Pancreas (tissue), 10 donors: ENCODE measurements at regions of chr7 and their contacts with region 1.

Region 1: DNA sequence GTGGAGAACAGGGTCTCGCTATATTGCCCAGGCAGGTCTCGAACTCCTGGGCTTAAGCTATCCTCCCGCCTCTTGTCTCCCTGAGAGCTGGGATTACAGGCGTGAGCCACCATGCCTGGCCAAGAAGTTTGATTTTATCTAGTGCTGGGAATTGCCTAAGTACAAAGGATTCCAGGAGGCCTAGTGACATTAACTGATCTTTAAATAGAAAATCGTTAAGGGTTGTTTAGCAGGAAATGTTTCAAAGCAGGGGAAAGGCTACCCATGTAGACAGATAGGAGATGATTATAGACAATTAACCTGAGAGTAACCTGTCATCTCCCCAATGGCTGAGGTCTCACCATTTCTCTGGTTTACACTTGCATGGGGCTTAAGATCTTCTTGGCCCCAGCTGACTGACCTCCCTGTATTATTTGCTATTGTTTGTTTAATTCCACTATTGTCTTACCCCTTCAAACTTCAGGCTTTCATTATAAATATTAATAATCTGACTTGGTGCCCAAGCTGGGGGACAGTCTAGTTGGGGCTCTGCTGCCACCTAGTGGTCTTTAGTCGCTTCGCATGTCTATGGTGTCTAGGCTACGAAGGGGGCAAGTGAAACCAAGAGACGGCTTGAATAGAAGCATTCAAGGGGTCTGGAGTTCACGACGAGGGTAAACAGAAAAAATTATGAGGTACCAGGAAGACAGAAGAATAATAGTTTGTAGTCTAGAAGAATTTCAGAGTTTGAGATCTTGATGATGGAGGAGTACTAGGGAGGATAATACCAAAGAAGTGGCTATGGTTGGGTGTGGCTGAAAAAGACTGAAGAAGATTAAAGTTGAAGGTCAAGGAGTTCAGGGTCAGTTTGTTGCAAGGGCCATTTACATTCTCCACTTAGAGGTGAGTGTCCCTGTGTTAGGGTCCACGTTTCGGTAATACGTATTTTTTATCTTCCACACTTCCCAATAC is 40.4 kb upstream of the BPGM start:
- DNase-seq: peak in 5 of 6 donors; percentile 16 to 66 (median 46)
- ATAC-seq: peak; percentile 89 to 97 (median 94)
- H3K4me3 ChIP-seq: no peak overlapping the region
- H3K27ac ChIP-seq: no peak overlapping the region
- H3K4me1 ChIP-seq: peaks cover 0 to 2% (median 0%) of the 10 kb centered on the region in 3 donors
- H3K27me3 ChIP-seq: peaks cover 0 to under 1% (median 0%) of the 10 kb centered on the region in 4 donors
- CTCF ChIP-seq: peak; percentile 85 to 91 (median 88)

Region 2: GRCh38 chr7:133983685-133984419 is 622.4 kb before region 1 on chr7:
- intact Hi-C with region 1: no loop called
- DNase-seq: no peak
- ATAC-seq: no peak
- H3K4me3 ChIP-seq: no peak overlapping the region
- H3K27ac ChIP-seq: no peak overlapping the region
- H3K4me1 ChIP-seq: no peaks in the 10 kb centered on the region
- H3K27me3 ChIP-seq: no peaks in the 10 kb centered on the region
- CTCF ChIP-seq: no peak

Region 3: GRCh38 chr7:134444198-134444871 is 161.9 kb before region 1 on chr7:
- intact Hi-C with region 1: loop called in 1 of 3 experiments (anchors 5 kb)
- DNase-seq: no peak
- ATAC-seq: peak in 2 of 4 donors; percentile 50 to 72
- H3K4me3 ChIP-seq: no peak overlapping the region
- H3K27ac ChIP-seq: peak overlapping the region in 1 of 4 donors; percentile 22
- H3K4me1 ChIP-seq: no peaks in the 10 kb centered on the region
- H3K27me3 ChIP-seq: no peaks in the 10 kb centered on the region
- CTCF ChIP-seq: no peak

Region 4: DNA sequence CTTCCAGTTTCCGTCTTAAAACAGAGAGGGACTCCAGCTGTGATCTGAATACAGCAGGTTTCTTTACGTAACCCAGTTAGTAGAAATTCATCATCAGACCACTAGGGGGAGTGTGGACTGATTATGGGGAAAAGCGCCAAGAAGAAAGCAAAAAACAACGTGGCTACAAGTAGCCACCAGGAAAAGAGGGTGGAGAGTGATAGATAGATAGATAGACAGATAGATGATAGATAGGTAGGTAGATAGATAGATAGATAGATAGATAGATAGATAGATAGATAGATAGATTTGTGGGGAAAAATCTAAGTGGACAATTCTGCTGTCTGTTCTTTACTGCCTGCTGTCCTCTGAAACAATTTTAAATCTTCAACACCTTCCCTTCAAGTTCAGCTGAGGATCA is 91.6 kb before region 1 on chr7:
- intact Hi-C with region 1: loop called in 1 of 3 experiments (anchors 5 kb)
- DNase-seq: peak in 1 of 6 donors; percentile 33
- ATAC-seq: peak; percentile 69 to 87 (median 84)
- H3K4me3 ChIP-seq: no peak overlapping the region
- H3K27ac ChIP-seq: no peak overlapping the region
- H3K4me1 ChIP-seq: peaks cover 0 to under 1% (median 0%) of the 10 kb centered on the region in 3 donors
- H3K27me3 ChIP-seq: no peaks in the 10 kb centered on the region
- CTCF ChIP-seq: peak; percentile 61 to 82 (median 72)